MCF 10A (cell line): ENCODE measurements at regions of chr12 and their contacts with region 1.

Region 1: GRCh38 chr12:50222275-50222795 is 55.2 kb upstream of the CERS5 start:
- DNase-seq: peak; percentile 85
- H3K4me3 Mint-ChIP-seq: no peak overlapping the region
- H3K27ac Mint-ChIP-seq: no peak overlapping the region
- H3K4me1 Mint-ChIP-seq: peaks cover 18% of the 10 kb centered on the region
- H3K27me3 Mint-ChIP-seq: no peaks in the 10 kb centered on the region
- CTCF ChIP-seq: no peak

Region 2: GRCh38 chr12:49987625-49988303 is 234.6 kb before region 1 on chr12:
- CTCF ChIA-PET with region 1: no interaction called
- POLR2A ChIA-PET with region 1: no interaction called
- intact Hi-C with region 1: no loop called
- DNase-seq: no peak
- H3K4me3 Mint-ChIP-seq: no peak overlapping the region
- H3K27ac Mint-ChIP-seq: no peak overlapping the region
- H3K4me1 Mint-ChIP-seq: peaks cover 18% of the 10 kb centered on the region
- H3K27me3 Mint-ChIP-seq: no peaks in the 10 kb centered on the region
- CTCF ChIP-seq: no peak

Region 3: DNA sequence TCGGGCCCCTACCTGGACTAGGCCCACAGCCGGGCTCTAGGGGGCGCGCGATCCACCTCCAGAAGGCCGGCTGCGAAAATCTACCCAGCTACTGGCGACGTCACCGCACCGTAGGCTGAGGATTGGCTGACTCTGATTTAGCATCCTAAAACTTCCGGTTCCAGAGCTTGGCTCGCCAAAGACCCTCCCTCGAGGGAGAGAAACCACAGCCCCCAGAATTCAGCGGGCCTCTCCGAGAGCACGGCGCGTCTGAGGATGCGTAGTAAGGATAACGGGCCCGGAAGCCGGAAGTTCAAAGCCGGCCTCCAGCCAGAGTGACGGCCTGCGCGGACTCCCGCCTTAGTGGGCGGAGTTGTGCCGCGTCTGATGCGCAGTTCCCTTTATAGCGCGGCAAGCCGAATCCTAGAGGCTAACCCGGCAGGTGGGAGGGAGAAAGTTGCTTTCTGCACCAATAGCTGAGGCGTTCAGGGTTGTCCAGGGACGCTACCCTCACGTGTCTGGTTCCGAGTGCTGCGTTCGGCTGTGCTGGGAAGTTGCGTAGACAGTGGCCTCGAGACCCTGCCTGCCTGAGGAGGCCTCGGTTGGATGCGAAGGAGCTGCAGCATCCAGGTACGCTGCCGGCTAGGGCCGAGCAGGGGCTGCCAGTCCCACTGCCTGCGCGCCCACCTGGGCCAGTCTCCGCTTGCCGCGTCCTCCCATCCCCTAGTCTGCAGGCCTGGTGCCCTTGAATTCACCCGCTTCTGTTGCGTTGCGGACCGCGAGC is 110.5 kb before region 1 on chr12 and contains the start of gene COX14:
- CTCF ChIA-PET with region 1: interaction called, 6 read pairs
- POLR2A ChIA-PET with region 1: interaction called, 10 read pairs
- intact Hi-C with region 1: no loop called
- DNase-seq: peak; percentile 99
- H3K4me3 Mint-ChIP-seq: peak within 1 kb of the TSS; percentile 99
- H3K27ac Mint-ChIP-seq: peak within 1 kb of the TSS; percentile 93
- H3K4me1 Mint-ChIP-seq: peaks cover 12% of the 10 kb centered on the region
- H3K27me3 Mint-ChIP-seq: no peaks in the 10 kb centered on the region
- CTCF ChIP-seq: peak; percentile 80
- total RNA-seq, gene COX14: 43.6 and 45.2 TPM in 2 replicates

Region 4: GRCh38 chr12:50201978-50202521 is 20.3 kb before region 1 on chr12:
- CTCF ChIA-PET with region 1: interaction called, 4 read pairs
- POLR2A ChIA-PET with region 1: interaction called, 59 read pairs
- intact Hi-C with region 1: no loop called
- DNase-seq: peak; percentile 63
- H3K4me3 Mint-ChIP-seq: peak overlapping the region; percentile 25
- H3K27ac Mint-ChIP-seq: peak overlapping the region; percentile 74
- H3K4me1 Mint-ChIP-seq: peaks cover 17% of the 10 kb centered on the region
- H3K27me3 Mint-ChIP-seq: no peaks in the 10 kb centered on the region
- CTCF ChIP-seq: no peak

Region 5: DNA sequence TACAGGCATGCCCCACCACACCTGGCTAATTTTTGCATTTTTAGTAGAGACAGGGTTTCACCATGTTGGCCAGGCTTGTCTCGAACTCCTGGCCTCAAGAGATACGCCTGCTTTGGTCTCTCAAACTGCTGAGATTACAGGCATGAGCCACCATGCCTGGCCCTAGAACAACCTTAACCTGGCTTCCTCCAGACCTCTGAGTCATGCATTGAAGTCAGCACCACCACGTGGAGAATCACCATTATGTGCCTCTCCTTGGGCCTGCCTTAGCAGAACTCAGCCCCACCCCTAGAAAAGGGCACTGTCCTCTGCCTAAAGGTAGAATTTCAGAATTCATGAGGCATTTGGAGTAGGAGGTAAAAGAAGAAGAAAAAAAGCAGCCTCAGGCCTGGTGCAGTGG is 12.0 kb after region 1 on chr12:
- CTCF ChIA-PET with region 1: interaction called, 3 read pairs
- POLR2A ChIA-PET with region 1: interaction called, 12 read pairs
- intact Hi-C with region 1: no loop called
- DNase-seq: peak; percentile 83
- H3K4me3 Mint-ChIP-seq: no peak overlapping the region
- H3K27ac Mint-ChIP-seq: no peak overlapping the region
- H3K4me1 Mint-ChIP-seq: peaks cover 5% of the 10 kb centered on the region
- H3K27me3 Mint-ChIP-seq: no peaks in the 10 kb centered on the region
- CTCF ChIP-seq: no peak

Region 6: DNA sequence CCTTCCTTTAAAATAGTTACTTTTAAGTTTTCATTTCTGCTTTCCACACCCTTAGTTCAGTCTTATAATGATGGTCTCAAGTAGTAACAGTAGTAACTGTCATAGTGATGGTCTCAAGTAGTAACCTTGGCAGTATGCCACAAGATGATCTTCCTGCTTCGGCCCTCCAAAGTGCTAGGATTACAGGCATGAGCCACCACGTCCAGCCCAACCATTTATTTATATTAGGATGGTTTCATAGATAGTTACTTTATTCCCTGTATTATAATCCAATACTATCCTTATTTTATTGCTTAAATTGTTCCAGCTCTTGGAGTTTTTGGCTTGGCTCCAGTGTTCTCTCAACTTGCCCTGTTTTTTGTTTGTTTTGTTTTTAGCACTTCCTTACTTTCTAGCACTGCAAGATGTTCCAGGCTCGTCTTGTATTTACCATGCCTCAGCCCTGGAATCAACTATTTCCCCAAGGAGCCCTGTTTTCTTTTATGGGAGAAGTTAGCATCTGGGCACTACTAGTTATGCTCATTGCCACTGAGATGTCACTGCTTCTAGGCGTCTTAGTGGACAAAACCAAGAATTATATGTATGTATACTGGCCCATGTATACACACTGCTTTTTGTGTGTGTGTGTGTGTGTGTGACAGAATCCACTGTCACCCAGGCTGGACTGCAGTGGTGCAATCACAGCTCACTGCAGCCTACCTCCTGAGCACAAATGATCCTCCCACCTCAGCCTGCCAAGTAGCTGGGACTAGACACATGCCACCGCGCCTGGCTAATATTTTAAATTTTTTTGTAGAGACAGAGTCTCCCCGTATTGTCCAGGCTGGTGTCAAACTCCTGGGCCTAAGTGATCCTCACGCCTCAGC is 35.6 kb after region 1 on chr12:
- CTCF ChIA-PET with region 1: interaction called, 5 read pairs
- POLR2A ChIA-PET with region 1: interaction called, 67 read pairs
- intact Hi-C with region 1: no loop called
- DNase-seq: peak; percentile 56
- H3K4me3 Mint-ChIP-seq: peak overlapping the region; percentile 9
- H3K27ac Mint-ChIP-seq: peak overlapping the region; percentile 84
- H3K4me1 Mint-ChIP-seq: peaks cover 37% of the 10 kb centered on the region
- H3K27me3 Mint-ChIP-seq: no peaks in the 10 kb centered on the region
- CTCF ChIP-seq: no peak

Region 7: DNA sequence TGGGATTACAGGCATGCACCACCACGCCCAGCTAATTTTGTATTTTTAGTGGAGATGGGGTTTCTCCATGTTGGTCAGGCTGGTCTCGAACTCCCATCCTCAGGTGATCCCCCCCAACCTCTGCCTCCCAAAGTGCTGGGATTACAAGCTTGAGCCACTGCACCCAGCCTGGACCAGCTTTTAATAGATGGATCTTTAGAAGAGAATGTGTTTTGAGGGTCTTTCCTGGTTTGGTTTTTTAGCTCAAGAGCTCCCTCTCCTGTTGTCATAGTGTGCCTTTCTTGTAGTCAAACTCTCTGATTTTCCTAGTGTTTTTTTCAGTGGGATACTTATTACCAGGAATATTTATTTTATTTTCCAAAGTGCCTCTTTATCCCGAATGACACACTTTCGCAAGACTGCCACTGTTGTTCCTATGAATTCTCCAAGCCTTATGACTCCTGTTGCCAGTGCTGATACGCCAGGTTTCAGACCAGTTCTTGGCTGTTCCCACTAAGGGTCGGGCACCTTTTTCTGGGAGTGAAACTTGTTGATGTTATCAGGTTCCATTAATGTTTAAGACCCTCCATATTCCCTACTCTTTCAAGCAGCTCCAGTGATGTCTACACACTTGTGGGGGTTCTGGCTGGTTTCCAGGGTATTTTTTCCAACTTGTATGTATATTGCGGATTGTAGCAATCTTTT is 92.4 kb after region 1 on chr12:
- CTCF ChIA-PET with region 1: interaction called, 10 read pairs
- POLR2A ChIA-PET with region 1: interaction called, 24 read pairs
- intact Hi-C with region 1: loop called (anchors 1 kb)
- DNase-seq: peak; percentile 39
- H3K4me3 Mint-ChIP-seq: no peak overlapping the region
- H3K27ac Mint-ChIP-seq: no peak overlapping the region
- H3K4me1 Mint-ChIP-seq: peaks cover 5% of the 10 kb centered on the region
- H3K27me3 Mint-ChIP-seq: no peaks in the 10 kb centered on the region
- CTCF ChIP-seq: peak; percentile 58

Region 8: GRCh38 chr12:50353869-50354593 is 131.7 kb after region 1 on chr12:
- CTCF ChIA-PET with region 1: no interaction called
- POLR2A ChIA-PET with region 1: no interaction called
- intact Hi-C with region 1: no loop called
- DNase-seq: no peak
- H3K4me3 Mint-ChIP-seq: no peak overlapping the region
- H3K27ac Mint-ChIP-seq: no peak overlapping the region
- H3K4me1 Mint-ChIP-seq: peaks cover 4% of the 10 kb centered on the region
- H3K27me3 Mint-ChIP-seq: no peaks in the 10 kb centered on the region
- CTCF ChIP-seq: no peak

Region 9: GRCh38 chr12:50442178-50442908 is 220.0 kb after region 1 on chr12:
- CTCF ChIA-PET with region 1: no interaction called
- POLR2A ChIA-PET with region 1: no interaction called
- intact Hi-C with region 1: no loop called
- DNase-seq: no peak
- H3K4me3 Mint-ChIP-seq: no peak overlapping the region
- H3K27ac Mint-ChIP-seq: peak overlapping the region; percentile 49
- H3K4me1 Mint-ChIP-seq: peaks cover 10% of the 10 kb centered on the region
- H3K27me3 Mint-ChIP-seq: no peaks in the 10 kb centered on the region
- CTCF ChIP-seq: no peak